BJ (cell line): ENCODE measurements at regions of chr1 and their contacts with region 1.

Region 1: DNA sequence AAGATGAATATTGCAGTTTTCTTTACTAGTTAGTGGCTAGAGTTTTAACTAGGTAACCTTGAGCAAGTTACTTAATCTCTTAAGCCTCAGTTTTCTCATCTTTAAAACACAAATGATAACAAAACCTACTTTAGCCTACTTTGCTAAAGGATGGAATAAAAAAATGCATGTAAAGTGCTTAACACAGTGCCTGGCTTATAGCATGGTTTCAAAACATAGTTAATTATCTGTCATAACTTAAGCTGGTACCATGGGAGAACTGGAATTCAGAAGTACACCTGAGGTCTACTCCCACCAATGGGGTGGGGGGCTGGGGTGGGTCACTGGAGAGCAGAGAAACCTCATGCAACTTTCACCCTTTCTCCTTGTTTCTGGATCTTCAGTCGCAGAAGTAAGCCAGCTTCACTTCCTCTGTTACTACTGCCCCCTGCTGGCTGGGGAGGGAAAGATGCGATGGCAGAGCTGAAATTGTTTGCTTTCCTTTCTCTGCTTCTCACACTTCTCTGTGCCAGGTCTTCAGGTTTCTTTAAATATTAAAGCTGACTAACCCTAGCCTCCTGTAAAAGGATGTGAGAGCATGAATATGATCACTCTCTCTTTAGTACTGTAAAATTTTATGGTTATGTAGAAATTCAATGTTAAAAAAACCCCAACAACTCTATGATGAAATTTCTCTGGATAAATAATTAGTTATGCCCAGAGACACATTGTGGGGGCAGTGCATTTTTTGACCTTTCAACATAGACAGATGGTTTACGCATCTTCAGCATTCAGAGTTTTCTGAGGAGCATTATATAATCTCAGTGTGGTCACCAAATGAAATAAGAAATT is 324.2 kb downstream of the HLX start:
- DNase-seq: peak; percentile 28
- H3K4me3 ChIP-seq: no peak overlapping the region
- H3K27me3 ChIP-seq: no peaks in the 10 kb centered on the region
- CTCF ChIP-seq: peak; percentile 91

Region 2: DNA sequence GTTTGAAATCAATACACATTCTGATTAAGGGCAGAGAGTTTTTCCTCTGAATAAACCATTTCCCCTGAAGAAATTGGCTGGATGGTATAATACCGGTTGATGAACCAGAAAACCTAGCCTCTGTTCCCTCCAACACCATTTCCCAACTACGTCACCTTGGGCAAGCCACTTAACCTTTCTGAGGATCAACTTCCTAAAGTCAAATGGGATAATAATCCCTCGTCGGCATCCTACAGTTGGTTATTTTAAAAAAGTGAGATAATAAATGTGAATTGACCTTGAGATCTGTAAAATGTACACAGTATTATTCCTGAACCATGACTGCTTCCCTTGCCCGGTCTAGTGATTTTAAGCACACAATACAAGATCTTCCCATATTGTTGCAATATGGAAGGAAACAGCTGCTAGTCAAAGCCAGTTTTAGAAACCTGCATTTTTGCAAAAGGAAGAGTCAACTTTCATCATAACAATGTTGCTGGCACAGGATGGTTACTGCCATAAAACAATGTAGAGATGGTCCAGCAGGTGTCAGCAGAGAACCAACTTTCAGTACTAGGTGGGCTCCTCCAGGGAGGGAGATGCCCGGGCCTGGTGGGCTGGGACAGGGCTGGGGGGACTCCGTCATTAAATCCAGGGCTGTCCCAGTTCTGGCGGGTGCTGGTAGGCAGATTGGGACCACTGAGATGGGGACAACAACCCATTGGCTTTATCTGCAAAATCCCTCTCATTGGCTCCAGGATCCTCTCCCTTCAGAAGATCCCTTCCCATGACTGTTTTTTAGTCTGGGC is 329.4 kb before region 1 on chr1:
- CTCF ChIA-PET with region 1: interaction called, 46 read pairs
- POLR2A ChIA-PET with region 1: no interaction called
- DNase-seq: no peak
- H3K4me3 ChIP-seq: no peak overlapping the region
- H3K27me3 ChIP-seq: no peaks in the 10 kb centered on the region
- CTCF ChIP-seq: peak; percentile 71

Region 3: DNA sequence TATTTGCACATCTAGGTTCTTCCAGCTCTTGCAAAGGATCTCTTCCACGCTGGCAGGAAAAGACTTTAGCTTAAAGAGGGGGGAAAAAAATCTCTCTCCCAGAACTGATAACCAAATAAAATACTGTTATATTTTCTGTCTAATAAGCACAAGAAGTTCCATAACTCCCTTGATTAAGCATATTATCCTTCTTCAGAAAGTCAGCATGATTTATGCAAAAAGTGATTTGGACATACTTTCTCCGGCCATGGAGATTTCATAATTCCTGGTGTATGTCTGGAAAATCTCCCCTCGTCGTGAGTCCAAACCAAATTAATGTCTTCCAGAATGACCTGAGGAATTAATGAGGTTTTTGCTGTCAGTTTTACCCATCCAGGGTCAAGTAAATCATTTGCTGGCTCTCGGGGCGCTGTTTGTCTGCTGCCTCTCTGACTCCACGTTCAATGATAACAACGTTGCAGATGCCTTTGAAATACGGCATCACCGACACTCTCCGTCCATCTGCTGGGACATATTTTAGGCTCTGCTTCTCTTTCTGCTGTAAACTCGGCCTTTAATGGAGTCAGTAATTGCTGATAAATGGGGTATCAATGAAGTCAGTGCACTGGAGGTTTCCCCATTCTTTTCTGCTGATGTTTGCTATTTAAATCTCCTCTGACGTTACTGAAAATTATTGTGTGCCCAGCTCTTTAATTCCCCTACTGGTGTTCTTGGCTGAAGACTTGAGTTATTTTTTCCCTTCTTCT is 211.3 kb before region 1 on chr1:
- CTCF ChIA-PET with region 1: interaction called, 10 read pairs
- POLR2A ChIA-PET with region 1: no interaction called
- DNase-seq: no peak
- H3K4me3 ChIP-seq: no peak overlapping the region
- H3K27me3 ChIP-seq: no peaks in the 10 kb centered on the region
- CTCF ChIP-seq: no peak

Region 4: GRCh38 chr1:221192055-221192454 is 11.4 kb before region 1 on chr1:
- CTCF ChIA-PET with region 1: interaction called, 10 read pairs
- POLR2A ChIA-PET with region 1: no interaction called
- DNase-seq: no peak
- H3K4me3 ChIP-seq: no peak overlapping the region
- H3K27me3 ChIP-seq: no peaks in the 10 kb centered on the region
- CTCF ChIP-seq: no peak

Region 5: GRCh38 chr1:221217029-221217428 is 13.6 kb after region 1 on chr1:
- CTCF ChIA-PET with region 1: interaction called, 12 read pairs
- POLR2A ChIA-PET with region 1: no interaction called
- DNase-seq: no peak
- H3K4me3 ChIP-seq: no peak overlapping the region
- H3K27me3 ChIP-seq: no peaks in the 10 kb centered on the region
- CTCF ChIP-seq: no peak